ENCODE measurements at regions of chr17 and their contacts with region 1.

Region 1: DNA sequence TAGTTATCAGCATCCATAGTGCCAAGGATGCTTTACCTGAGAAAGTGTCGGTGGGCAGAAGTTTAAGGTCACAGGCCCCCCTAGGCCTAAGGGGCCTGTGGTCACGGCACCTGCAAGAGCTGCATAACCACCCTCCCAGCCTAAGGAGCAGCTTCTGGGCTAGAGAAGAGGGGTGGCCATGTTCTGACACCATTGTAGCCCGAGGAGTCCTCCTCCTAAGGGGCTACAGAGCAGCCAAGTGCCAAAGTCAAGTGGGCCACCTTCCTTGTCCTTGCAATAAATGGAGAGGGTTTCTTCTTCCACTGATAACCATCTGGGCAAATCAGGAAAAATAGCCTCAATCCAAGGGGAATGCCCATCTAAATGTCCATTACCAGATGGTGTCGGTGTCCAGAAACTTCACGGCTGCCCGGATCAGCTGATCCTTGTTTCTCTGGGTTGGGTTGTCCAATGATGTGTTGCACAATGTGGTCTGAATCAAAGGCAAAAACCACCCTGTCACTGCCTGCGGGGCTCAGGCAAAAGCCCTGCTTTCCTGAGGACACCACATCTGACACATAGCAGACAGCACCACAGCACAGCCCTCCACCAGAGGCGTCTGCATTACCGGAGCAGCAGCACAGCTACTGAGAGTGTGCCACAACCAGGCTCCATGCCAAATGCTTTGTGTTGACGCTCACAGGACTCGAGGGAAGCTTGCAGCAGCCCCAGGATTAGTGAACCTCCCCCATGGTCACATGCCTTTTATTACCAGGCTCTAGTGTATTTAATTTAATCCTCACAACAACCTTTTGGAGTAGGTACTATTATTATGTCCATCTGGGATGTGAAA is 12.8 kb downstream of the ATPAF2 start:
- DNase-seq: peak in 33 of 35 experiments; percentile 14 to 73 (median 38)
- ATAC-seq: peak; percentile 57 to 99 (median 78)
- H3K4me3 ChIP-seq: no peak overlapping the region
- H3K4me3 Mint-ChIP-seq: no peak overlapping the region
- H3K27ac ChIP-seq: no peak overlapping the region
- H3K27ac Mint-ChIP-seq: no peak overlapping the region
- H3K4me1 ChIP-seq: peaks cover 0 to 19% of the 10 kb centered on the region in 2 experiments
- H3K4me1 Mint-ChIP-seq: peaks cover 0 to 17% (median 13%) of the 10 kb centered on the region in 3 donors
- H3K27me3 ChIP-seq: no peaks in the 10 kb centered on the region
- H3K27me3 Mint-ChIP-seq: no peaks in the 10 kb centered on the region

Region 2: GRCh38 chr17:17196776-17197175 is 829.4 kb before region 1 on chr17:
- CTCF ChIA-PET with region 1: no interaction called
- POLR2A ChIA-PET with region 1: interaction called in 1 of 2 experiments, 11 read pairs
- DNase-seq: no peak
- ATAC-seq: no peak
- H3K4me3 ChIP-seq: no peak overlapping the region
- H3K4me3 Mint-ChIP-seq: no peak overlapping the region
- H3K27ac ChIP-seq: no peak overlapping the region
- H3K27ac Mint-ChIP-seq: no peak overlapping the region
- H3K4me1 ChIP-seq: no peaks in the 10 kb centered on the region
- H3K4me1 Mint-ChIP-seq: peaks cover 0 to 16% (median 9%) of the 10 kb centered on the region in 3 donors
- H3K27me3 ChIP-seq: no peaks in the 10 kb centered on the region
- H3K27me3 Mint-ChIP-seq: no peaks in the 10 kb centered on the region

Region 3: DNA sequence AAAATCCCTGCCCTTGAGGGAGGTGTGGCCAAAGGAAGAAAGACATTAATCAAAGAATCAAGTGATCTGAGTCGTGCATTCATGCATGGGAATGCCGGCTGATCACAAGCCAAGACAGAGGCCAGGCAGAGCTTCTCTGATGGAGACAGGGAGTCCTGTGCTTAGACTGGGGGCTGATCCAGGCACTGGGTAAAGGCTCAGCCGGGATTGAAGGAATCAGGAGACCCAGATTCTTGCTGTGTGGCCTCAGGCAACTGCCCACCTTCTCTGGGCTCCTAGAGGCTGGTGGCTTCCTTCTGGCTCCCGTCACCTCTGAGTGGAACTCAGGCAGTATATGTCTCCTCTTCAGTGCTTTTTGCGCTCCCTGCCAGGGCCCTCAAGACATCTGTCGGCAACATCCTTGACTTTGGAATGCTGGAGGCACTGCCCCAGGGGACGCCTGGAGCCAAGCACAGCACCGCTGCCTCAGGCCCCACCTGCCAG is 327.3 kb before region 1 on chr17:
- CTCF ChIA-PET with region 1: no interaction called
- POLR2A ChIA-PET with region 1: no interaction called
- DNase-seq: no peak
- ATAC-seq: no peak
- H3K4me3 ChIP-seq: no peak overlapping the region
- H3K4me3 Mint-ChIP-seq: no peak overlapping the region
- H3K27ac ChIP-seq: no peak overlapping the region
- H3K27ac Mint-ChIP-seq: no peak overlapping the region
- H3K4me1 ChIP-seq: peaks cover 16 to 34% of the 10 kb centered on the region in 2 experiments
- H3K4me1 Mint-ChIP-seq: peaks cover 28 to 46% (median 35%) of the 10 kb centered on the region in 3 donors
- H3K27me3 ChIP-seq: no peaks in the 10 kb centered on the region
- H3K27me3 Mint-ChIP-seq: no peaks in the 10 kb centered on the region

Region 4: DNA sequence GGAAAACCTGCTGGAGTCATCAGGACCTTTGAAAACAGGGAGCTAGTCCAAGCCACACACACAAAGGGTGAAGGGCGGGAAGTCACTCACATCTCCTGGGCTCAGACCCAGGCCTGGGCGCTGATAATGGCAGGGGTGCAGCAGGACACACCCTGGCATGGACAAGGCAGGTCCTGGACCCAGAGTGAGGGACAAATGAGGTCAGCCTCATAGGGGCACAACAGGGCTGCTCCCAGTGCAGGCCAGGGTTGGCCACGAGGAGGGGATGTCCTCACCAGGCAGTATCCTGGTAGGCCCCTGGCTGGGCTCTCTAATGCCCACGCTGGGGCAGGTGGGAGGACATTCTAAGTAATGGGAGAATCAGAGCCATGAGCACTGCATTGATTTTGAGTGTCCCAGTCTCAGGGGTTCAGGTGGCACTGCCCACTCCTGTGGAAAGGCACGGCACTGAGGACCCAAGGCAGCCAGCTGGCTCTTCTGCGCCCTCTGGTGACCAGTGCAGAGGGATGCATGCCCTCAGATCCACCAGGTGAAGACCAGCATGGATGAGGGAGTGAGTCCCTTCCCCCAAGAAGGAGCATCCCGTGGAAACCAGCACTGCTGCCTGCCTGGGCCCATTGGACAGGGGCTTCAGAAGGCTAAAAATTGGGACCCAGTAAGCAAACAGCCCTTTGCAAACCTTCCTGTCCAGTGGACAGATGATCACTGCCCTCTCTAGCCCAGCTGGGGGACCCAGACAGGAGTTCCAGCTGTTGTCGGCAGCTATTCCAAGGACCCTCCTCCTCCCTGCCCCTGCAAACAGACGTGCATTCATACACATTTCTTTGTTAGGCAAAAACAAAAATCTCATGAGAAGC is 166.0 kb before region 1 on chr17:
- CTCF ChIA-PET with region 1: no interaction called
- POLR2A ChIA-PET with region 1: interaction called in 1 of 2 experiments, 19 read pairs
- DNase-seq: peak; percentile 35 to 85 (median 63)
- ATAC-seq: peak; percentile 86 to 93 (median 90)
- H3K4me3 ChIP-seq: no peak overlapping the region
- H3K4me3 Mint-ChIP-seq: no peak overlapping the region
- H3K27ac ChIP-seq: no peak overlapping the region
- H3K27ac Mint-ChIP-seq: no peak overlapping the region
- H3K4me1 ChIP-seq: peaks cover 27 to 38% of the 10 kb centered on the region in 2 experiments
- H3K4me1 Mint-ChIP-seq: peaks cover 42 to 54% (median 50%) of the 10 kb centered on the region in 3 donors
- H3K27me3 ChIP-seq: no peaks in the 10 kb centered on the region
- H3K27me3 Mint-ChIP-seq: no peaks in the 10 kb centered on the region

Region 5: GRCh38 chr17:17928398-17929287 is 97.5 kb before region 1 on chr17:
- CTCF ChIA-PET with region 1: no interaction called
- POLR2A ChIA-PET with region 1: no interaction called
- DNase-seq: no peak
- ATAC-seq: no peak
- H3K4me3 ChIP-seq: no peak overlapping the region
- H3K4me3 Mint-ChIP-seq: no peak overlapping the region
- H3K27ac ChIP-seq: no peak overlapping the region
- H3K27ac Mint-ChIP-seq: peak overlapping the region in 1 of 2 donors; percentile 58
- H3K4me1 ChIP-seq: no peaks in the 10 kb centered on the region
- H3K4me1 Mint-ChIP-seq: peaks cover 22 to 43% (median 31%) of the 10 kb centered on the region in 3 donors
- H3K27me3 ChIP-seq: no peaks in the 10 kb centered on the region
- H3K27me3 Mint-ChIP-seq: no peaks in the 10 kb centered on the region

Region 6: DNA sequence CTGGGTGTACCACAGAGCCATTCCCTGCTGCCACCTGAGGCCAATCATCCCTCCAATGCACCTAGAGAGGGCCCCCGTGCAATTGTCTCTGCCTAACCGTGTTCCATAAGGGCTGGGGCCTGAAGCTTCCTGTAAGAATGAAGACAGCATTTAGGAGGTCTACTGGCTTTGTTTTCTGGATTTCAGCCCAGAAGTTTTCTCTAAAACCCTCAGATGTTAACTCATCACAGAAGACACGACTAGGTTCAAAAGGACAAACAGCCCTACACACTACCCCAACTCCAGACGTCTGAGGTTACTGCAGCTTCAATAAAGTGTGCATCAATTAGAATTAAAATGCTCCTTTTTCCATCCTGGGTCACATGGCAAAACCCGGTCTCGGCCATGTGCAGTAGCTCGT is 50.8 kb after region 1 on chr17:
- CTCF ChIA-PET with region 1: no interaction called
- POLR2A ChIA-PET with region 1: no interaction called
- DNase-seq: no peak
- ATAC-seq: no peak
- H3K4me3 ChIP-seq: no peak overlapping the region
- H3K4me3 Mint-ChIP-seq: no peak overlapping the region
- H3K27ac ChIP-seq: no peak overlapping the region
- H3K27ac Mint-ChIP-seq: no peak overlapping the region
- H3K4me1 ChIP-seq: no peaks in the 10 kb centered on the region
- H3K4me1 Mint-ChIP-seq: no peaks in the 10 kb centered on the region
- H3K27me3 ChIP-seq: peaks cover 0 to 34% of the 10 kb centered on the region in 2 experiments
- H3K27me3 Mint-ChIP-seq: peaks cover 11 to 20% of the 10 kb centered on the region in 2 donors

Measured in T-cell (primary cell).